CD8-positive, alpha-beta T cell (primary cell): ENCODE measurements at regions of chr5 and their contacts with region 1.

Region 1: DNA sequence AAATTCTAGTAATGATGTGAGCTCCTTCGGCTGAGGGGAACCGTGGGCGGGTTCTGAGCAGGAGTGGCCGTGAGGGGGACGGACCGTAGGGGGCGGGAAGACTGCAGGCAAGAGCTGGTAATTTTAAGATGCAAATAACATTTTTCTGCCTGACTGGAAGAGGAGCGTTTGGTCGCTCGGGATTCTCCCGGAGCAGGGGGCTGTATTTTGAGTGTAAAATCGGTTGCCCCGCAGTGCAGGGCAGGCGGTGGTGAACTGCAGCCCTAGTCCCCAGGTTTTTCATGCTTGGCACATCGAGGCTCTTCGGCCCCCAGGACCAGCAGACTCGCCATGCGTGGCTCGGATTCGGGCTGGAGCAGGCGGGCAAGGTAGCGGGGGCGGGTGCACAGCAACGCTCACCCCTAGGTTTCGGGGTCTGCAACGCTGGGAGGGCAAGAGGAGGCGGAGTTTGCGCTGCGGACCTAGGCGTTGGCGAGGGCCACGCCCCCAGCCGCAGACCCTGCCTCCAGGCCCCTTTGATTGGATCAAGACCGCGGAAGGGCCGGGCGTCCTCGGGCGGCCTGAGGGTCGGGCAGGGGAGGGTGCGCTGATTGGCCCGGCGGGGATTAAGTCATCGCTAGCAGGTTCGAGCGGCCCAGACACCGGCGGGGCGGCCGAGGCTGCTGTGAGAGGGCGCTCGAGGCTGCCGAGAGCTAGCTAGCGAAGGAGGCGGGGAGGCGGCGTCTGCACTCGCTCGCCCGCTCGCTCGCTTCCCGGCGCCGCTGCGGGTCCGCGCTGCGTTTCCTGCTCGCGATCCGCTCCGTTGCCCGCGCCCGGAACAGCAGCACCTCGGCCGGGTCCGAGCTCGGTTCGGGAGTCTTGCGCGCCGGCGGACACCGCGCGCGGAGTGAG is at the start of gene ARHGAP26:
- DNase-seq: peak; percentile 87 to 97 (median 92)
- ATAC-seq: peak; percentile 85
- H3K4me3 ChIP-seq: peak within 1 kb of the TSS; percentile 96 to 98
- H3K4me3 Mint-ChIP-seq: peak within 1 kb of the TSS; percentile 95
- H3K27ac ChIP-seq: peak within 1 kb of the TSS; percentile 74 to 78
- H3K27ac Mint-ChIP-seq: peak within 1 kb of the TSS; percentile 93
- H3K4me1 ChIP-seq: peaks cover 27% of the 10 kb centered on the region
- H3K4me1 Mint-ChIP-seq: peaks cover 45% of the 10 kb centered on the region
- H3K27me3 ChIP-seq: no peaks in the 10 kb centered on the region
- H3K27me3 Mint-ChIP-seq: no peaks in the 10 kb centered on the region
- CTCF ChIP-seq: no peak
- total RNA-seq, gene ARHGAP26: 46.0 to 46.6 TPM

Region 2: DNA sequence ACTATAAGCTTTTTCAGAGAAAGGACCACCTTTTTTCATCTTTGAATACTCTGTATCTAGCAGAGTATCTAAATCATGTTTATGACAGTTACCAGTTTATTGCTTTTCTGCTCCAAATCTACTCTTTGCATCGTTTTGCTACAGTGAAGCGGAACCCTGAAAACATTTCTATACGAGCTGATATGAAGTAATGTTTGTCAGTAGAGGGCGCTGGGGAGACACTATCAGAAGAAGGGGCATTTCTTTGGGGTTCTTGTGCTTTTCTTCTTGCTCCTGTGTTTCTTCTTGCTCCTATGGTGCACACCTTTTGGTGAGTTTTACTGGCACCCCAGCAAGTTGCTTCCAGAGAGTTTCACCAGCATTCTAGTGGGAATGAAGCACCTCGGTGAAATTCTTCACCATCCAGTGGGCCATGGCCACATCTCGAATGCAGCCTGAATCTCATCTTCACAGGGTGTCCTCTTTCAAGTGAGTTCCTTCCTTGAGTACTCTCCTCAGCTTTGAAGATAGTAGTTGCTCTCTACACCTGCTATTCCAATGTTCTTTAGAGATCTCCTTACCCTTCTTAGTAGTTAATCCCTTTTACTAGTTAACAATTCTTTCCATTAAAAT is 182.5 kb before region 1 on chr5:
- CTCF ChIA-PET with region 1: no interaction called
- POLR2A ChIA-PET with region 1: no interaction called
- intact Hi-C with region 1: no loop called
- DNase-seq: peak in 2 of 9 experiments; percentile 41 to 49
- ATAC-seq: no peak
- H3K4me3 ChIP-seq: no peak overlapping the region
- H3K4me3 Mint-ChIP-seq: no peak overlapping the region
- H3K27ac ChIP-seq: no peak overlapping the region
- H3K27ac Mint-ChIP-seq: no peak overlapping the region
- H3K4me1 ChIP-seq: no peaks in the 10 kb centered on the region
- H3K4me1 Mint-ChIP-seq: peaks cover 4% of the 10 kb centered on the region
- H3K27me3 ChIP-seq: no peaks in the 10 kb centered on the region
- H3K27me3 Mint-ChIP-seq: peaks cover 31% of the 10 kb centered on the region
- CTCF ChIP-seq: peak; percentile 35

Region 3: GRCh38 chr5:142699184-142699720 is 70.7 kb before region 1 on chr5:
- CTCF ChIA-PET with region 1: no interaction called
- POLR2A ChIA-PET with region 1: no interaction called
- intact Hi-C with region 1: no loop called
- DNase-seq: peak; percentile 53 to 83 (median 74)
- ATAC-seq: peak; percentile 91
- H3K4me3 ChIP-seq: no peak overlapping the region
- H3K4me3 Mint-ChIP-seq: no peak overlapping the region
- H3K27ac ChIP-seq: no peak overlapping the region
- H3K27ac Mint-ChIP-seq: no peak overlapping the region
- H3K4me1 ChIP-seq: no peaks in the 10 kb centered on the region
- H3K4me1 Mint-ChIP-seq: no peaks in the 10 kb centered on the region
- H3K27me3 ChIP-seq: no peaks in the 10 kb centered on the region
- H3K27me3 Mint-ChIP-seq: no peaks in the 10 kb centered on the region
- CTCF ChIP-seq: peak; percentile 84

Region 4: GRCh38 chr5:142713121-142713706 is 56.8 kb before region 1 on chr5:
- CTCF ChIA-PET with region 1: interaction called, 17 read pairs
- POLR2A ChIA-PET with region 1: interaction called, 3 read pairs
- intact Hi-C with region 1: loop called in 1 of 2 experiments (anchors 1 kb)
- DNase-seq: peak; percentile 70 to 93 (median 83)
- ATAC-seq: peak; percentile 95
- H3K4me3 ChIP-seq: peak overlapping the region; percentile 61 to 82
- H3K4me3 Mint-ChIP-seq: peak overlapping the region; percentile 76
- H3K27ac ChIP-seq: peak overlapping the region in 1 of 2 experiments; percentile 49
- H3K27ac Mint-ChIP-seq: peak overlapping the region; percentile 45
- H3K4me1 ChIP-seq: peaks cover 4% of the 10 kb centered on the region
- H3K4me1 Mint-ChIP-seq: peaks cover 18% of the 10 kb centered on the region
- H3K27me3 ChIP-seq: no peaks in the 10 kb centered on the region
- H3K27me3 Mint-ChIP-seq: no peaks in the 10 kb centered on the region
- CTCF ChIP-seq: peak; percentile 98

Region 5: DNA sequence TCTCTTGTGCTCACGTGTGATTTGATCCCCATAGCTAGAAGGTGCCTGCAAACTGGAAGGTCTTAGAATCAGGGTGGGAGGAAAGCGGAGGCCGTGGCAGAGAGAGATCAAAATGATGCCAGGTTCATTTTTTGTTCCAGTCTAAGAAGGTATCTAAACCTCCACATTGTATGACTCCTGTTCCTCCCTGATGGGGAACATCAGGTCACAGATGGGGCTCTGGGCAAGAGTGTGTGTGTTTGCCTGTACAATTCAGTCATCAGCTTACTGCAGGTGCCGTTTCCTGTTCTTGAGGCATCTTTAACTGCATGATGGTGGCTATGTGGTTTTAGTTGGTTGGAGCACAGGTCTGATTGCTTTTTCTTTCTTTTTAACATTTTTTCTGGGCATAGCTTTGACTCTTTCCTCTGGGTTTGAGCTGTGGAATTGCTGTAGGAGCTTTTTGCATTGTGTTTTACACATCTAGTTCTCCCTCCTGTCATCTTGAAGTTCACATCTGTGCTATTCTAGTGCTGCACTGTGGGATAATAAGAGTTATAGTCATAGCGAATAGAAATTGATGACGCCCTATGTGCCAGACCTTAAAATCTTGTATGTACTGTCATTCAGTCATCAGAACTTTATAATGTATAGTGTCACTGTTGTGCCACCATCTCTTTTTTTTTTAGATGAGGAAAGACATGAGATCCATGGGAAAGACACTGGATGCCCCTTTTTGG is 30.9 kb after region 1 on chr5:
- CTCF ChIA-PET with region 1: interaction called, 57 read pairs
- POLR2A ChIA-PET with region 1: interaction called, 71 read pairs
- intact Hi-C with region 1: loop called (anchors 1 to 2 kb)
- DNase-seq: peak in 8 of 9 experiments; percentile 25 to 83 (median 60)
- ATAC-seq: peak; percentile 77
- H3K4me3 ChIP-seq: peak overlapping the region; percentile 4 to 32
- H3K4me3 Mint-ChIP-seq: peak overlapping the region; percentile 78
- H3K27ac ChIP-seq: peak overlapping the region; percentile 41 to 70
- H3K27ac Mint-ChIP-seq: peak overlapping the region; percentile 92
- H3K4me1 ChIP-seq: peaks cover 62% of the 10 kb centered on the region
- H3K4me1 Mint-ChIP-seq: peaks cover 83% of the 10 kb centered on the region
- H3K27me3 ChIP-seq: no peaks in the 10 kb centered on the region
- H3K27me3 Mint-ChIP-seq: no peaks in the 10 kb centered on the region
- CTCF ChIP-seq: no peak

Region 6: GRCh38 chr5:142860270-142860669 is 90.3 kb after region 1 on chr5:
- CTCF ChIA-PET with region 1: interaction called, 24 read pairs
- POLR2A ChIA-PET with region 1: interaction called, 6 read pairs
- intact Hi-C with region 1: no loop called
- DNase-seq: no peak
- ATAC-seq: no peak
- H3K4me3 ChIP-seq: no peak overlapping the region
- H3K4me3 Mint-ChIP-seq: no peak overlapping the region
- H3K27ac ChIP-seq: no peak overlapping the region
- H3K27ac Mint-ChIP-seq: no peak overlapping the region
- H3K4me1 ChIP-seq: peaks cover 12% of the 10 kb centered on the region
- H3K4me1 Mint-ChIP-seq: peaks cover 79% of the 10 kb centered on the region
- H3K27me3 ChIP-seq: no peaks in the 10 kb centered on the region
- H3K27me3 Mint-ChIP-seq: no peaks in the 10 kb centered on the region
- CTCF ChIP-seq: no peak

Region 7: DNA sequence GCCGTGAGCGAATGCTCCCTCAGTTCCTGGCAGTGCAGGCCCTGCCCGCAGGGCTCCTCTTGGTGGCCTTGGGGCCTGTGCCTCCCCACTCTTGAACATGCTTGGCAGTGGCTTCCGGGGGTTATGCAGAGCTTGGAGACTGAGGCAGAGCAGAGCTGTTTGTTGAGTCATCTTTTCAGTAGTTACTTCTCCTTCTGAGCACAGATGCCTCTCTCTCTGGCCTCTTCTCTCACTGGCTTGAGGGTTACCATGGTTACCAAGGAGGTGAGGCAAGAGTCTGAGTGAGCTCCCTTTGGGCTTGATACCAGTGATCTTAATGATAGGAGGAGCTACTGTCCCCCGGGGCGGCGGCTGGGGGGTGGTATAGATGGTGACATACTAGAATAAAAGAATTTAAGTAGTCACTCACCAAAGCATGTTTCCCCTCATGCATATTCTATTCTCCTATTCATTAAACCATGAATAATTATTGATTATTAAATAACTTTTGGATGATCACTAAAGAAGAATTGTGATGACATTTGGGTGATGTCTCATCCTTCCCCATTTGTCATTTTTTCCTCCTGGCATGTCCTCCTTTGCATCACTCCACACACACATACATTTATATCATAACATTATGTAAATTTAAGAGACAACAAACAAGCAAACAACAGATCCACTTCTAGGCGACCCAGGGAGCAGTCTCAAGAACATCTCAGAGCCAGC is 111.2 kb after region 1 on chr5:
- CTCF ChIA-PET with region 1: interaction called, 17 read pairs
- POLR2A ChIA-PET with region 1: interaction called, 7 read pairs
- intact Hi-C with region 1: no loop called
- DNase-seq: peak in 1 of 9 experiments; percentile 39
- ATAC-seq: no peak
- H3K4me3 ChIP-seq: no peak overlapping the region
- H3K4me3 Mint-ChIP-seq: no peak overlapping the region
- H3K27ac ChIP-seq: no peak overlapping the region
- H3K27ac Mint-ChIP-seq: no peak overlapping the region
- H3K4me1 ChIP-seq: no peaks in the 10 kb centered on the region
- H3K4me1 Mint-ChIP-seq: peaks cover 6% of the 10 kb centered on the region
- H3K27me3 ChIP-seq: no peaks in the 10 kb centered on the region
- H3K27me3 Mint-ChIP-seq: no peaks in the 10 kb centered on the region
- CTCF ChIP-seq: no peak

Region 8: DNA sequence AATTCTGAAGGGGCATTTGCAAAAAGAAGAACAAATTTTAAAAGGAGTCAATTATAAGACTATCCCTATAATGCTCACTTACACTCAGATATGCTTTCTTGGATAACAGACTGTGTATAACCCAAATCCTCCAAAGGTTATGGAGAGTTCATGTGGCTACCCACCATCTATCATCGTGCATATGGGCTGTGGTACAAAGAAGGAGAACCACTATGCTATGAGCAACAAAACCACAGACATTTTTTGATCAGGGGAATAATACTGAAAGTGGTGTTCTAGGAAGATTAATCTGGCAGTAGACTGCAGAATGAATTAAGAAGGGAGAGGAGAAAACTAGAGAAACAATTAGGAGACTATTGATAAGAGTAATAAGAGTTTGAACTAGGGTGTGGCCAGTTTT is 616.7 kb after region 1 on chr5:
- CTCF ChIA-PET with region 1: no interaction called
- POLR2A ChIA-PET with region 1: no interaction called
- intact Hi-C with region 1: no loop called
- DNase-seq: no peak
- ATAC-seq: peak; percentile 58
- H3K4me3 ChIP-seq: no peak overlapping the region
- H3K4me3 Mint-ChIP-seq: no peak overlapping the region
- H3K27ac ChIP-seq: no peak overlapping the region
- H3K27ac Mint-ChIP-seq: no peak overlapping the region
- H3K4me1 ChIP-seq: peaks cover 34% of the 10 kb centered on the region
- H3K4me1 Mint-ChIP-seq: peaks cover 86% of the 10 kb centered on the region
- H3K27me3 ChIP-seq: no peaks in the 10 kb centered on the region
- H3K27me3 Mint-ChIP-seq: no peaks in the 10 kb centered on the region
- CTCF ChIP-seq: no peak